ENCODE measurements at regions of chr16 and their contacts with region 1.

Region 1: GRCh38 chr16:15888072-15888976 is at the start of gene CEP20:
- DNase-seq: peak; percentile 100
- H3K4me3 ChIP-seq: peak within 1 kb of the TSS; percentile 70 to 89 (median 74)
- H3K27ac ChIP-seq: peak within 1 kb of the TSS; percentile 85 to 92 (median 87)
- H3K4me1 ChIP-seq: peaks cover 0 to 39% (median 37%) of the 10 kb centered on the region in 4 donors
- H3K27me3 ChIP-seq: no peaks in the 10 kb centered on the region
- CTCF ChIP-seq: peak in 3 of 4 experiments; percentile 23 to 48 (median 36)
- EP300 ChIP-seq: no peak
- POLR2A ChIP-seq: peak; percentile 33 to 54
- total RNA-seq, gene CEP20: 29.5 to 44.2 (median 34.7) TPM

Region 2: DNA sequence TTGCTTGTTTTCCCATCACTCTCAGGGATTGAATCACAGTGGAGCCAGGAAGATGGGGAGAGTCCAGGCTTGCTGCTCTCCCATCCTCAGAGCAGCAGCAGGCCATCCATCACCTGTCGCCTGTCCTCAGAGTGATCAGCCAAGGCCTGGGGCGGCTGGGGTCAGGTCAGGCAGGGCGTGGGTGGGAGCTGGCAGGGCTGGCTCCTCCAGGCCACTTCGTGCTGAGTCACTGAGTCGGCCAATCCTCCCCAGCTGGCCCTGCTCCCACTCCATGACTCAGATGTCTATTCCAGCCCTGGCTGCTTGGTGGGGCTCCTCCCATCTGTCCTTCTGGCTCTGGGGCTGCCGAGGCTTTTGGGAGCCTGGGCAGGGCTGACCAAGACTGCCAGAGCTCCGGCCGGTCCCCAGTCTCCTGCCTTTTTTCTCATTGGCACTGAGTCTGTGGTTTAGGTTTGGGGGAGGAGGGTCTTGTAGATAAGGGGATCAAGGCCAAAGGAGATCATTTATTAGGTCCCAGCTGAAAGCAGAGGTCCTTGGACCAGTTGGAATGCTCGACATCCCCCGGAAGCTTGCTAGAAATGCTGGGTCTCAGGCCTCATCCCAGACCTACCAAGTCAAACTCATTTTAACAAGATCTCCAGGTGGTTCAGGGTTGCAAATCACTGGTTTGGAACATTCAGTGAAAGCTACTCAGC is 133.8 kb after region 1 on chr16:
- intact Hi-C with region 1: loop called (anchors 5 kb)
- DNase-seq: peak; percentile 99
- H3K4me3 ChIP-seq: peak overlapping the region in 2 of 4 donors; percentile 9 to 21
- H3K27ac ChIP-seq: peak overlapping the region; percentile 85 to 91 (median 86)
- H3K4me1 ChIP-seq: peaks cover 3 to 64% (median 41%) of the 10 kb centered on the region in 4 donors
- H3K27me3 ChIP-seq: no peaks in the 10 kb centered on the region
- CTCF ChIP-seq: no peak
- EP300 ChIP-seq: peak in 1 of 4 donors; percentile 24
- POLR2A ChIP-seq: no peak

Region 3: DNA sequence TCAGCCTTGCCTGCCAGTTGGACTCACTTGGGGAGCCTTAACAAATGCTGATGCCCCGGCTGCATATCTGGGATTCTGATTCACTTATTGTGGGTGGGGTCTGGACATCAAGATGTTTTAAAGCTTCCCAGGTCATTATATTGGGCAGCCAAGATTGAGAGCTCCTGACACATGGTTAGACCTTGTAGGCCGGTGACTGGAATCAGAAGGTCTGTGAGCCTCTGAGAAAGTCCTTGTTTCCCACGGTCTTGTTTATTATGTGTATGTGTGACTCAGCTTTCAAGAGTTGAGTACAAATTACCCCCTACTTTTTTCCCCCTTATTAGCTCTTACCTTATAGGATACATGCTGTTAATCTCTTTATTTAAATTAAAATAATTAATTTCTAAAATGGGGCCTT is 164.6 kb after region 1 on chr16:
- intact Hi-C with region 1: loop called (anchors 5 kb)
- DNase-seq: no peak
- H3K4me3 ChIP-seq: no peak overlapping the region
- H3K27ac ChIP-seq: peak overlapping the region; percentile 27 to 89 (median 59)
- H3K4me1 ChIP-seq: peaks cover 0 to 36% (median 23%) of the 10 kb centered on the region in 4 donors
- H3K27me3 ChIP-seq: no peaks in the 10 kb centered on the region
- CTCF ChIP-seq: no peak
- EP300 ChIP-seq: no peak
- POLR2A ChIP-seq: no peak

Measured in sigmoid colon (tissue), 7 donors.